Thyroid gland (tissue), 4 donors: ENCODE measurements at regions of chr3 and their contacts with region 1.

Region 1: DNA sequence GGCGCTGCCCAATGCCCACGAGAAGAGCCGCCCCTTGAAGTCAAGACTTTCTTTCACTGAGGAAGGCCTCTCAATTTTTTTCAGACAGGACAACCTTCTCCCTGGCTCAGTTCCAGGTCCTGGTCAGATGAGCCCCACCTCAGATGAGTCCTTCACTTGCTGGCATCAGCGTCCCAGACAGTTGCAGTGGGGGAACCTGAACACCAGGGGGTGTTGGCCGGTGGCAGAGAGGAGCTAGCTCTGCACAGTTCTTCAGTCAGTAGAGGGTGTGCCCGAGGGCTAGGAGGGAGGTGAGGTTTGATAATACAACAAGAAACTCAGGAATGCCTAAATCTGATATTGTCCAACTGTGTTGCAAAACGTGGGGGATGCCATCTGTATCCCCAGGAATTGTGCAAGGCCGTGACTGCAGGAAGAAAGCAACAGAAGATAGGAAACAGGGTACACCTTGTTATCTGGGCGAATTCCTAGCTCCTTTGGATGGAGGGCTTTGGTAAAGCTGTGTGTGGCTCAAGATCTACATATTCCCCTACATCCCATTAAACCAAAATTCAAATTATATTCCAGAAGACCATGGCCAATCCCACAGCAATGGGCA is 34.3 kb downstream of the CCR3 start:
- DNase-seq: peak; percentile 59 to 65
- H3K4me3 ChIP-seq: no peak overlapping the region
- H3K27ac ChIP-seq: no peak overlapping the region
- H3K4me1 ChIP-seq: no peaks in the 10 kb centered on the region
- H3K27me3 ChIP-seq: no peaks in the 10 kb centered on the region
- CTCF ChIP-seq: peak; percentile 39 to 70 (median 64)
- POLR2A ChIP-seq: no peak

Region 2: DNA sequence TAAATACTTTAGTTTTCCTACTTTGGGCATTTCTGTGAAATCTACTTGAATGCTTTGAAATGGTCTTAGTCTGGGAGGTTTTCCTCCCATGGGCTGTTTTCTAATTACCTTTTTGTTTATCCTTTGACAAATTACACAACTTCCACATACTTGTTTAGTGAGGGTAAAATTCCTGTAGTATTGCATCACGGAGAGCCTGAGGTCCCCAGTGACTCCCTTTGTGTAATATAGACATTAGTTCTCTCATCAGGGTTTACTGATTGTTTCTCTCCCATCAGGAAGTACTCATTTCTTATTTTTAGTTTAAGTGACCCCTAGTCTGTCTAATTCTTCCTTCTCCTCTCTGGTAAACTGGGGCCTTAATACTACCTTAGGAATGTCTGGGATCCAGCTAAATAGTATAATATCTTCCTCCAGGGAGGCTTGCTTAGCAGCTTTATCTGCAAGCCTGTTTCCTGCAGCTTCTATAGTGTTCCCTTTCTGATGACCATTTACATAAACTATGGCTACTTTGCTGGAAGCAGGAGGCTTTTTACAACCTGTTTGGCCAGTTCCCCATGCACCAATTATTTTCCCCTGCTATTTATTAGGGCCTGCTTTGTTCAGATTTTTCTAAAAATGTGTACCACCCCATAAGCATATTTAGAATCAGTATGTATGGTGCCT is 162.1 kb before region 1 on chr3:
- intact Hi-C with region 1: no loop called
- DNase-seq: no peak
- H3K4me3 ChIP-seq: no peak overlapping the region
- H3K27ac ChIP-seq: no peak overlapping the region
- H3K4me1 ChIP-seq: peaks cover 0 to 8% of the 10 kb centered on the region in 2 donors
- H3K27me3 ChIP-seq: no peaks in the 10 kb centered on the region
- CTCF ChIP-seq: no peak
- POLR2A ChIP-seq: no peak

Region 3: GRCh38 chr3:46442576-46443562 is 166.3 kb after region 1 on chr3:
- intact Hi-C with region 1: loop called (anchors 5 kb)
- DNase-seq: peak in 1 of 2 donors; percentile 59
- H3K4me3 ChIP-seq: no peak overlapping the region
- H3K27ac ChIP-seq: no peak overlapping the region
- H3K4me1 ChIP-seq: peaks cover 0 to 4% of the 10 kb centered on the region in 2 donors
- H3K27me3 ChIP-seq: no peaks in the 10 kb centered on the region
- CTCF ChIP-seq: peak in 5 of 6 experiments; percentile 52 to 83 (median 69)
- POLR2A ChIP-seq: no peak

Region 4: DNA sequence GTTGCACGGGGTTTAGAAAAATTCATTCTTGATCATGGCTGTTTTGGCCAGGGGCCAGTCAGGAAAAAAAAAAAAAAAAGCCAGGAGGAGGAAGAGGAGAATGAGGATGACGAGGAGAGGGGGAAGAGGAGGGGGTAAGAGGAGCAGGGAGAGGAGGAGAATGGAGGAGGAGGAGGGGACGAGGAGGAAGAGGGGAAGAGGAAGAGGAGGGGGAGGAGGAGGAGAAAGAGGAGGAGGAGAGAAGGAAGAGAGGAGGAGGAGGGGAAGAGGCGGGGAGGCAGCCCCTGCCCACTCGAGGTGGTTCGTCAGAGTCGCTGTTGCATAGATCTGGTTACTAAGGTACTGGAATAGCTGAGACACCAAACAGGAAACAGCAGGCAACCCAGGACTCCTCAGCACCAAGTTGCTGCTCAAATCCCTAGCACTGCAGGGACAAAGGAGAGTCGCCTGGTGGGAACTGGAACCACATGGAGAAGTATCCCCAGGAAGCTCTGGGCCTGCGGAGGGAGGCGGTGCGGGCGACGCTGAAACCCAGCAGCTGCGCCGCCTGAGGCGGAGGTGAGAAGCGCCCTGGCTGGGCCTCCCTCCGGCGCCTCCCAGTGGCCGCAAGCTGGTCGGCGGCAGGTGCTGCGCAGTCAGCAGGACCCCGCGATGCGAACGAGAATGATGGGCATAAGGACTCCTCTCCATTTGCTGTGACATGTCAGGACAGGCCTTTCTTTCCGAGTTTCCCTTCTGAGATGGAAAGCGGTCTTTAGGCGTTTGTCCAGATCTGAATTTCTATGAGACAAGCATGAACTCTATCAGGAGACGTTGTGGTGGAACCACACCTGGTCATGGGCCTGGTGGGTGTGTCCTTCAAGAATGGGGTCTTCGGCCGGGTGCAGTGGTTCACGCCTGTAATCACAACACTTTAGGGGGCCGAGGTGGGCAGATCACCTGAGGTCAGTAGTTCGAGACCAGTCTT is 353.2 kb after region 1 on chr3:
- intact Hi-C with region 1: no loop called
- DNase-seq: peak; percentile 86 to 89
- H3K4me3 ChIP-seq: no peak overlapping the region
- H3K27ac ChIP-seq: peak overlapping the region; percentile 50 to 87 (median 53)
- H3K4me1 ChIP-seq: peaks cover 16% of the 10 kb centered on the region in 2 donors
- H3K27me3 ChIP-seq: no peaks in the 10 kb centered on the region
- CTCF ChIP-seq: peak; percentile 96 to 100 (median 99)
- POLR2A ChIP-seq: peak in 1 of 2 donors; percentile 61